ENCODE measurements at regions of chr7 and their contacts with region 1.

Region 1: DNA sequence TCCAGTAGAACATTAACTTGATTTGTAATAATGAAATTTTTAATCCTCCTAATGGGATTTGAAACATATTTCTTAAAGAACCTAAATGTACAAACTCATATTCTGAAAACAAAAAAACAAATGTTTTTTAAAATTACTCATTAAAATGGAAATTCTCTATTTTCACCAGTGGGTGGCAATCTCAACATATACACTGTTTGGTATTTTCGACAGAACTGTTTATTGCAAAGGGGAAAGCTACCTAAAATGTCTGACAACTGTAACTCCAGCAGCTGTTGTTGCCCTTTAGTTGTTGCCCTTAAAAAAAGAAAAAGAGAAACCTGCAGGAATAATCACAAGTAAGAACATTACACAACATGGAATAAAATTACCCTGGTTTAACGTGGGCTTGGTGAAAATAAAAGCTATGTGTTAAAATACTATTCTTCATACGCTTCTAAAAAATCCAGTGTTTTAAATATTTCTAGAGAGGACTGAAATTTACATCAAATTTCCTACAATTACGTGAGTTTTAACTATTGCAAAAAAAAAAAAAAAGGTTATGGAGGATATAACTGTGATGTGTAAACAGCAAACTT is 54.5 kb downstream of the COL1A2 start:
- DNase-seq: no peak
- H3K4me3 ChIP-seq: no peak overlapping the region
- CTCF ChIP-seq: peak; percentile 28

Region 2: GRCh38 chr7:94436018-94436604 is 13.1 kb before region 1 on chr7:
- CTCF ChIA-PET with region 1: interaction called, 14 read pairs
- POLR2A ChIA-PET with region 1: no interaction called
- DNase-seq: no peak
- H3K4me3 ChIP-seq: no peak overlapping the region
- CTCF ChIP-seq: peak; percentile 69

Region 3: DNA sequence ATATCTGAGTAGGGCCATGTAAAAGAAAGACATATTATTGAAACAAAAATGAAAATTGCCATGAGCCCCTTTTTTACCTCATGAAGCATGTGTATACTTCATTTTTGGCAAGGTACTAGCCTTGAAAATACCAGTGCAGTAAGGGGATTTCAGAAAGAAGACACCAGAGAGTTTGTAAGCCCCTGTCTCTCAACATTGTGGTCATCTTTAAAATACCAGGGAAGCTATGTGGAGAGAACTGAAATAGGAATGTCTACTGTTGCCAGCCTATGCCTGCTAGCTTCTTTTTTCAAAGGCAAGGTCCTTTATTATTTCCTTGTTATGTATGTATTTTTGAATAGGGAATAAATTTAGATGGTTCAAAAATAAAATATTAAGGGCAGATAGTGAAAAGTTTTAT is 118.2 kb after region 1 on chr7:
- CTCF ChIA-PET with region 1: no interaction called
- POLR2A ChIA-PET with region 1: no interaction called
- DNase-seq: no peak
- H3K4me3 ChIP-seq: no peak overlapping the region
- CTCF ChIP-seq: no peak

Region 4: DNA sequence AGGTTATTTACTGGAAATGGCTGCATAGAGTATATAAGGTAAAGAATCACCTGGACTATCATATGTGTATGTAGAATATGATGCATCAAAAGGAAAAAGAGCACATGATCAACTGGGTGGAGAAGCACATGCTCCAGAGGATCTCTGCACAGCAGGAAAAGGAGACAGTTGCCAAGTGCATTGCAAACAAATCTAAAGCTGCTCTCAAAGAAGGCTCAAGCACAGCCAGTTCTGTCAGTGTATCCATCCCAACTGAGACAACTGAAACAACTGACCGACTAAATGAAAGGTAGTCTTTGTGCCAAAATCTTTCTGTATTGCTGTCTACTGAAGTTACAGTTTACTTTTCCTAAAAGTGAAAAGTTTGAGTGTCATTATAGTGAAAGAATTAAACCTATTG is 289.9 kb after region 1 on chr7:
- CTCF ChIA-PET with region 1: no interaction called
- POLR2A ChIA-PET with region 1: no interaction called
- DNase-seq: no peak
- H3K4me3 ChIP-seq: no peak overlapping the region
- CTCF ChIP-seq: no peak

Region 5: DNA sequence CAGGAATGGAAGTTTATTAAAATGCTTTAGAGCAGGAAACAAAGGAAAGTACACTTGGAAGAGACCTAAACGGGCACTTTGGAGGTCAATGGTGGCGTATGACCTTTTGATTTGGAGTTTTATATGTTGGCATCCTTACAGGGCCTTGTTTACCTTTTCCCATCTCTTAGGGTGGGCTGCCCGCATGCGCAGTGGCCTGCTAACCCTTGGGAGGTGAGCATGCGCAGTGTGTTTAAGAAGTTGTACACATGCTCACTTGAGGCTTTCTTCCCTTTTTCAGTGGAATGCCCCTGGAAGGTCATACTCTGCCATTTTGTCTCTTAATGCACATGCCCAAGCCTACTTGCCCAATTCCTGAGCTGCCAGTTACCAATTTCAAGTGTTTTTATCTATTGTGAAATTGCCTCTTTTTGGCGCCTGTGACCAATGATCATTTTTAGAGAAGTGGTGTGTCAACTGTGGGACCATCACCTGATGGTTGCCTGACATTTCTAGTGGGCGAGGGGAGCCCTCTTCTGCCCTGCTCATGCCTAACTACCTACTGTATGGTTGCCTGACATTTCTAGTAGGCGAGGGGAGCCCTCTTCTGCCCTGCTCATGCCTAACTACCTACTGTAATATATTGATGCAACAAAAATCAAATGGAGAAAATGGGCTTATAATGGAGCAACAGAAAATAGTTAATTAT is 596.1 kb after region 1 on chr7:
- CTCF ChIA-PET with region 1: interaction called, 43 read pairs
- POLR2A ChIA-PET with region 1: no interaction called
- DNase-seq: no peak
- H3K4me3 ChIP-seq: no peak overlapping the region
- CTCF ChIP-seq: peak; percentile 40

Region 6: DNA sequence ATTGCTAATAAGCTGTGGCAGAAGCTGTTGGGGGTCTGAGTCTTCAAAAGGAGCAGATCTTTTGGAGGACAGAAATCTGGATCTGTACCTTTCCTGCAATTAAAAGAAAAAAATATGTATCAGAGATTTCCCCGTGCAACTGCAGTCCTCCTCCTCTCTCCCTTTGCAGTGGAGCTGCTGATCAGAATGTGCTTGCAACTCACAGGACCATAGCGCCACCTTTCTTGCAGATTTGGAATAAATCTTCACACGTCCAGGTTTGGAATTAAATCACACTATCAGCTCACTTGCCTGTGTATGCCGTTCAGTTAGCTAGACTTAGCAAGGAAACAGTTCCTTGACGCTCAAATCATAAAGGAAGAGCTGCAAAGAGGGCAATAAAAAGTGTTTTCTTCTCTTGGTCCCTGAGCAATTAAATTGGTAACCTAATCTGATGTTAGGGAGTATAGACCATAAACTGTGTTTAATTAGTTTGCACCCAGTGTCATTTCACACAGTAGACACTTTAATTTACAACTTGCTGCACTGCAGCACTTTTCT is 797.7 kb after region 1 on chr7:
- CTCF ChIA-PET with region 1: interaction called, 51 read pairs
- POLR2A ChIA-PET with region 1: no interaction called
- DNase-seq: peak; percentile 23
- H3K4me3 ChIP-seq: no peak overlapping the region
- CTCF ChIP-seq: peak; percentile 60

Region 7: GRCh38 chr7:95690367-95690947 is 1241.2 kb after region 1 on chr7:
- CTCF ChIA-PET with region 1: interaction called, 15 read pairs
- POLR2A ChIA-PET with region 1: no interaction called
- DNase-seq: no peak
- H3K4me3 ChIP-seq: no peak overlapping the region
- CTCF ChIP-seq: peak; percentile 12

Measured in AG04449 (cell line).